ENCODE measurements at regions of chr6 and their contacts with region 1.

Region 1: DNA sequence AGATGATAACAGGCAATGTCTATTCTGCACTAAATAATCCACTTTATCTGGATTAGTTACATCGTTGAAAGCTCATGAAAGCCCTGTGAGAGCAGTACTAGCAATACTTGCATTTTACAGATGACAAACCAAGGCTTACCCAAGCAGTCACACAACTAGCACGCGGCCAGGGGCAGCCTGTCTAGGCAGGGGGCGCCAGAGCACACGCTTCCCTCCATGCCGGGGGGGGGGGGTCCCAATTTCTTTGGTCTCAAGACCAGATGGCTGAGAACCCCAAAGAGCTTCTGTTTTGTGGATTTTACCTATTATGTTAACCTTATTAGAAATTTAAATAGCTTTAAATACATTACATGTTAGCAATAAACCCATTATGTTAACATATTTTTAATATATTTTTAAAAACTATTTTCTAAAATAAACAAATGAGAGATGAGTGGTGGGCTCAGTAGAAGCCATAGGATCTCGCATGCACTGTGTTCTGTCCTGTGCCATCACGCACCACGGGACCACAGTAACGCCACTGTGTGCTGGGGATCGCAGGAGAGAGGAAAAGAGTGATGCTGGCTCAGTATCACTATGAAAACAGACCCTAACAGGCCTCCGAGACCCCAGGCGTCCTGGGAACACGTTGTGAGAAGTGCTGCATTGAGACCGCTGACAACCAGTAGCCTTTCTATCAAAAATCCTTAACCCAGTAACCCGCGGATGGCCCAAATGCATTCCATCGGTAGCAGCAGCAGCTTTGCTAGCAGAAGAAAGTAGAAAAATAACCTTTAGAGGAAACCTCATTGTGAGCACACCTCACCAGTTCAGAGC is 5.3 kb upstream of the PRR18 start:
- DNase-seq: peak in 4 of 5 donors; percentile 8 to 55 (median 32)
- H3K4me3 ChIP-seq: no peak overlapping the region
- H3K4me3 Mint-ChIP-seq: no peak overlapping the region
- H3K27ac ChIP-seq: no peak overlapping the region
- H3K27ac Mint-ChIP-seq: no peak overlapping the region
- H3K4me1 ChIP-seq: peaks cover 3% of the 10 kb centered on the region
- H3K4me1 Mint-ChIP-seq: peaks cover 0 to 6% (median 2%) of the 10 kb centered on the region in 4 donors
- H3K27me3 ChIP-seq: peaks cover 6% of the 10 kb centered on the region
- H3K27me3 Mint-ChIP-seq: peaks cover 7 to 15% of the 10 kb centered on the region in 2 donors

Region 2: DNA sequence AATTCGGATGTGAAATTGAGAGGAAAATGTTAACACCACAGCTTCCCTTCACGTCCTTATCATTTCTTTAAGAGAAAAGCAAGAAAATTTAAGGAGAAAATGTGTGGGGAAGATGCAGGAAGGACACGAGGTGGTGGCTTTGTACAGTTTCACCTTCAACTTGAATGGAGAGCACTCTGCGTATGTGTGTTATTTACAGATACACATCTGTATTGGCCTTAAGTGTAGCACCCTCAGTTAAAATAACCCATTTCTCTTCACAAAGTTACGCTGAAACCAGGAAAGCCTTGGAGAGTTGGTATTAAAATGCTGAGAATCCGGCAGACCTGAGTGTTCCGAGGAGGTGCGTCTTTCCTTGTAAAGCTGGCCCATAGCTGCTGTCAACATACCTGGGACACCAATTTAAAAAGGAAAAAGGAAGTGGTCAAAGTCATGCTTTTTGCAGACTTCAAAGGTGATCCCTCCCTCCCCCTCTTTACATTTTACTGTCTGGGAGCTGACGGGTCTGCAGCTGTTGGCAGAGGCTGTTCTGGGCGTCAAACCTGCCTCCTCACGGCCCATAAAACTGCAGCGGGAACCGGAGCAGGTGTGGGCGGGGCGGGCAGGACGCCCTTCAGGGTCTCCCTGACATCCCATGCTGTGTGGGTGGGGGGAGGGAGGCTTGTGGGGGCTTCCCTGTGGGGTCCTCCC is 84.5 kb before region 1 on chr6:
- CTCF ChIA-PET with region 1: no interaction called
- POLR2A ChIA-PET with region 1: no interaction called
- intact Hi-C with region 1: no loop called
- DNase-seq: no peak
- H3K4me3 ChIP-seq: no peak overlapping the region
- H3K4me3 Mint-ChIP-seq: peak overlapping the region in 6 of 8 donors; percentile 6 to 63 (median 40)
- H3K27ac ChIP-seq: no peak overlapping the region
- H3K27ac Mint-ChIP-seq: peak overlapping the region in 2 of 7 donors; percentile 57 to 64
- H3K4me1 ChIP-seq: peaks cover 7% of the 10 kb centered on the region
- H3K4me1 Mint-ChIP-seq: peaks cover 4 to 18% (median 12%) of the 10 kb centered on the region in 4 donors
- H3K27me3 ChIP-seq: no peaks in the 10 kb centered on the region
- H3K27me3 Mint-ChIP-seq: peaks cover 16 to 29% of the 10 kb centered on the region in 2 donors

Region 3: DNA sequence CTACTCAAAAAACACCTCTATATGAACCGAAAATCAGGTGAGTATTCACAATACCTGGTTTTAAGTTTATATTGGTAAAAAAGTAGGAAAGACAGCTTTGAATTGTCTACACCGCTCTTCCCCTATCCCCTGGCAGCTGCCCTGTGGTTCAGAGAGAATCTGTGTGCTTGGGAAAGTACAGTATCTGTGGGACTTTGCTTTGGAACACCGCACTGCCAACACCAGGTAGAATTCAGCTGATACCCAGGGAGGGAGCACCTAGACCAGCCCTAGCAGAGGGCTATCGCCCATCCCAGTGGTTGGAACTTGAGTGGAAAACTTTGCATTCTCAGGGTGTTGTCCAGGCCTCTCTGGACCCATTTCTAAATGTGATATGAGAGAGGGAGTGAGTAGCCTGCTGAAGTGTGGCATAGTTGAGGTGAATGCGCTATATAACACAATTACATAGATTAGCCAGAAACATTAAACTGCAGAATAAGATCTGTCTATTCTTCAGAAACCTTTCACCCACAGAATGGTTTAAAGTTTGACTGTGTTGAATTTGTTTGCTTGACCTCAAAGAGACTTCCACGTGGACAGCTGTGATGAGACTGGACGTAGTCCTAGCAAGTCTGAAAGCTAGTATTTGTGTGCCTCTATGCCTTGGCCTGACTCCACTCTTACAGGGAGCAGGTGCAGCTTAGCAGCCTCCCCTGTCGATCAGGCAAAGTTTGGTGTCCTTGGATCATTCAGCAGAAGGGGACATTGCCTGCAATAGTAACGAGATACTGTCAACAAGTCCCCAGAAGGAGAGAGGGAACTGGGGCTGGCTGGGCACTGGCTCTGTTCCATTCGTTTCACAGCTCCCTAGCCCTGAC is 80.8 kb after region 1 on chr6:
- CTCF ChIA-PET with region 1: interaction called, 104 read pairs
- POLR2A ChIA-PET with region 1: no interaction called
- intact Hi-C with region 1: no loop called
- DNase-seq: no peak
- H3K4me3 ChIP-seq: no peak overlapping the region
- H3K4me3 Mint-ChIP-seq: no peak overlapping the region
- H3K27ac ChIP-seq: no peak overlapping the region
- H3K27ac Mint-ChIP-seq: no peak overlapping the region
- H3K4me1 ChIP-seq: no peaks in the 10 kb centered on the region
- H3K4me1 Mint-ChIP-seq: peaks cover 0 to 2% (median 0%) of the 10 kb centered on the region in 4 donors
- H3K27me3 ChIP-seq: no peaks in the 10 kb centered on the region
- H3K27me3 Mint-ChIP-seq: peaks cover 5 to 7% of the 10 kb centered on the region in 2 donors

Measured in CD4-positive, alpha-beta memory T cell (primary cell).